AG04449 (cell line): ENCODE measurements at regions of chr7 and their contacts with region 1.

Region 1: DNA sequence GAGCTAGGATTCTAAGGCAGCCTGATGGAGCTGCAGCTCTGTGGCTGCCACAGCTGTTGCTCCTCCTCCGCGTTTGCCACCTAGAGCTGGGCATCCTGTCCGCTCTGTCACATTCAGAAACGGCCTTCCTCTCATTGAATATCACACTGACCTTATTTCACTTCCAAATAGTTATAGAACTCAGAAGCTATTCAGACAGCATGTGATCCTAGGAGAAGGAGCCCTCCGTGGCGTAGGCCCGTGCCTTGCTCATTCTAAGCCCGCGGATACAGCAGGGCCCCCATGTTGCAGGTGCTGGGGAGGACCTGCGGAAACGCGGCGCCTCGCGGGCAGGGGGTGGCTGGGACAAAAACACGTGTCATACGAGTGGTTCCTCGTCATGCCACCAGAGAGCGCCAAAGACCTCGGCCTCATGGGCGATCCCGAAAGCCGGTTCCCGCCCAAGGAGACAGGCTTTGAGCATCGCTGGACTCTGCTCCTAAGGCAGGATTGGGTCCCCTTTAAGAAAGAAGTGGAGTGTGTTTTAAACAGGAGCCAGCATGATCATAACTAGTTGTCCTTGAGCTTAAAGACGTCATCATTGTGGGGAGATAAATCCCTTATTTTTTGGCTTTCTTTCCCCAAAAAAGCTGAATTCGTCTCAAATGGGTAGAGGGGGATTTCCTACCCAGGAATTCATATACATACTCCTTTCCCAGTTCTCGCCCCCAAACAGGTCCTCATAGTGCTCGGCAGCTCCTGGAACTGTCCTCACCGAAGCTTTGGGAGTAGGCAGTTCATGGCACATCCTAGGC is 17.9 kb upstream of the FIGNL1 start:
- DNase-seq: no peak
- H3K4me3 ChIP-seq: 0 out of 2 replicates have a peak overlapping the region, but pooled peaks have one; percentile 15
- CTCF ChIP-seq: peak; percentile 90

Region 2: DNA sequence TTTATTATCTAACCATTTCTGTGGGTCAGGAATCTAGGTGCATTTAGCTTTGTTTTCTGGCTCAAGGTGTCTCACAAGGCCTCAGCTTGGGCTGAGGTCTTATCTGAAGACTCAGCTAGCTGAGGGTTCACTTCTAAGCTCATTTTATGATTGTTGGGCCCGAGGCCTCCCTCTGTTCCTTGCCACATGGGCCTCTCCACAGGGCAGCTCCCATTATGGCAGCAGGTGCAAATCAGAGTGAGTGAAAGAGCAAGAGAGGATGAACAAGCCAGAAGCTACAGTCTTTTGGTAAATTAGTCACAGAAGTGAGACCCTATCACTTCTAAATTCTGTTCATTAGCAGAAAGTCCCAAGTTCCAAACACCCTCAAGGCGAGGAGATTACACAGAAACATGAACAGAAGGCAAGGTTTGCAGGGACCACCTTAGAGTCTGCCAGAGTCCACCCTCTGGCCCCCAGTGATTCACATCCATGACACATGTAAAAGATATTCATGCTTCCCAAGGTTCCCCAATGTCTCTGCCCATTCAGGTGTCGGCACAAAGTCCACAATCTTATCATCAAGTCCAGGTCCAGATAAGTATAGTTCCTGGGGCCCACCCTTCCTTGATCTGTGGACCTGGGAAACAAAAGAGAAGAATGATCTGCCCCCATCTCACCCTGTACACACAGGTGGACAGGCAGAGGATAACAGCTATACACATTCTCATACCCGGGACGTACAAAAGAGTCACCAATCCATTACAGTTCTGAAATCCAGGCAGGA is 41.6 kb before region 1 on chr7:
- CTCF ChIA-PET with region 1: no interaction called
- POLR2A ChIA-PET with region 1: no interaction called
- DNase-seq: no peak
- H3K4me3 ChIP-seq: no peak overlapping the region
- CTCF ChIP-seq: no peak

Region 3: DNA sequence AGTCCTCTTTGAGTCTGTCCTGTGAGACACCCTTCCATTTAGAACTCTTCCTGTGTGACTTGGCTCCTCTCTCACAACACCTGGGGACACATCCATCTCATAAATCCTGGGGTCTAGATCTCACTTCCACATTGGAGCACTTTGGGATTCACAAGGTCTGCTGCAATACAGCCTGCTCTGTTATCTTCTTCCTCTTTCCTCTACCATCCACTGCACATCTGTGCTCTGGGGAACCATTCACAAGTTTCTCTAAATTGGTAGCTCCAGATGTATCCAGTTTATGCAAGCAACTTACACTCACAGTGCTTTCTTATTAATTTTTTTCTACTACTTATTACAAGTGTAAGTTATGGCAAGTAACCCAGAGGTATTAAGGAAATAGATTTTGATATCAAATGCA is 12.4 kb before region 1 on chr7:
- CTCF ChIA-PET with region 1: interaction called, 17 read pairs
- POLR2A ChIA-PET with region 1: no interaction called
- DNase-seq: no peak
- H3K4me3 ChIP-seq: no peak overlapping the region
- CTCF ChIP-seq: no peak

Region 4: DNA sequence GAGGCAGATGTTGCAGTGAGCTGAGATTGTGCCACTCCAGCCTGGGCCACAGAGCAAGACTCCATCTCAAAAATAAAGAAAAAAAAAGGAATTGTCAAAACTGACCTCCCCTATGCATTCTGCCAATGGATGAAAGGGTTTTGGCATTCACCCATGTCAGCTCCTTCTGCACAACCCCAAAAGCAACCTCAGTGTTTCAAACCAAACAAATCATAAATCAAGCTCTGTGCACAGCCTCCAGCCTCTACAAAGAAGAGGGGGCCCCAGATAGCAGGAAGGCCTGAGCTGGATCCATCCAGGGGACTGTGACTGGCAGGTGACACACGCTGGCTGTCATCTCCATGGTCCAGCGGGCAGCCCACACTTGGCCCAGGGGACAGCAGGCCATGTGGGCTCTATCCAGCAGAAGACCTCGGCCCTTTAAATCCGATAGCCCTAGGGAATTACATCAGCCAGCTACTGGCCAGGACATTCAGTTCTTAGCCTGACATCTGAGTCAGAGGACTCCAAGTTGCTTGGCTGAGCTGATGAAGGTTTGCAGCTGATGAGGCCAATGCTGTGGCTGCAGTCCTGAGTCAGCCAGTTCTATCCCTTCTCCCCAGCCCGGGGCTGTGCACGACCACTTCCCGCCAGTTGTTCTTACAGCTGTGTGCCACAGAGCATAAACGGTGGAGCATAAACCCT is 34.1 kb after region 1 on chr7:
- CTCF ChIA-PET with region 1: interaction called, 17 read pairs
- POLR2A ChIA-PET with region 1: no interaction called
- DNase-seq: peak; percentile 24
- H3K4me3 ChIP-seq: no peak overlapping the region
- CTCF ChIP-seq: no peak

Region 5: DNA sequence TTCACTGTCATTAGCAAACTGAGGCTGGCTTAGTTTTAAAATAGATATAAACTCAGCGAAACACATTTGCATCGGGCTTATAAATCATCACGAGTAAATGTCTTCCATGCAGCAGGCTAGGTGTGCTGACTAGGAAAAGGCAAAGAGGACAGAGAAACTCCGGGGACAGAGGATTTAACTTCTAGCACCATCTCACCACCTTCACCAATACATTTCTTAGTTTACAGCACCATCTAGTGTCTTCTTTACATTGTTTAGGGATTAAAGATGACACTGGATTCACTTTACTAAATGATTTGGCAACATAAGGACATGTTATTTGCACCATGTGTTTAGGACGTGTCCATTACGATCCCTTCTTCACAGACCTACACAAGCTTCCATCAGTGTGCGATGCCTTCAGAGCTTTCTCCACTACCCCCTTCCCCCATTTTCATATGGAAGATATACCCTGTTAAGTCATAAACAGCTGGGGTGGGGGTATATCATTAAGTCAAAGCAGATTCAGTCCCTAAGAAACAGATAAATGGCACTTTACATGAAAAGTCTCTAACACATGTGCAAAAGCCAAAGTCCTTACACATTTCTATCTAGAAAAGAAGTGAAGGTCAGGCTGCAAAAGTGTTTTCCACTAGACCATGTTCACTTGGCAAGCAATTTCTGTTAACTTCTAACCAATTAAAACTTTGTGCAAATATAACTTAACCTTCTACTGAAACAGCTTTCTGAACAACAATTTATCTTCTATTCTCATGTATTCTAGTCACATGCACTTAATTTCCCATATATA is 211.4 kb after region 1 on chr7:
- CTCF ChIA-PET with region 1: interaction called, 82 read pairs
- POLR2A ChIA-PET with region 1: no interaction called
- DNase-seq: no peak
- H3K4me3 ChIP-seq: no peak overlapping the region
- CTCF ChIP-seq: peak; percentile 13

Region 6: GRCh38 chr7:51135576-51135975 is 667.6 kb after region 1 on chr7:
- CTCF ChIA-PET with region 1: interaction called, 119 read pairs
- POLR2A ChIA-PET with region 1: no interaction called
- DNase-seq: no peak
- H3K4me3 ChIP-seq: no peak overlapping the region
- CTCF ChIP-seq: no peak

Region 7: GRCh38 chr7:51263631-51264484 is 795.8 kb after region 1 on chr7:
- CTCF ChIA-PET with region 1: no interaction called
- POLR2A ChIA-PET with region 1: no interaction called
- DNase-seq: no peak
- H3K4me3 ChIP-seq: no peak overlapping the region
- CTCF ChIP-seq: no peak